HAP-1 (cell line): ENCODE measurements at regions of chr12 and their contacts with region 1.

Region 1: DNA sequence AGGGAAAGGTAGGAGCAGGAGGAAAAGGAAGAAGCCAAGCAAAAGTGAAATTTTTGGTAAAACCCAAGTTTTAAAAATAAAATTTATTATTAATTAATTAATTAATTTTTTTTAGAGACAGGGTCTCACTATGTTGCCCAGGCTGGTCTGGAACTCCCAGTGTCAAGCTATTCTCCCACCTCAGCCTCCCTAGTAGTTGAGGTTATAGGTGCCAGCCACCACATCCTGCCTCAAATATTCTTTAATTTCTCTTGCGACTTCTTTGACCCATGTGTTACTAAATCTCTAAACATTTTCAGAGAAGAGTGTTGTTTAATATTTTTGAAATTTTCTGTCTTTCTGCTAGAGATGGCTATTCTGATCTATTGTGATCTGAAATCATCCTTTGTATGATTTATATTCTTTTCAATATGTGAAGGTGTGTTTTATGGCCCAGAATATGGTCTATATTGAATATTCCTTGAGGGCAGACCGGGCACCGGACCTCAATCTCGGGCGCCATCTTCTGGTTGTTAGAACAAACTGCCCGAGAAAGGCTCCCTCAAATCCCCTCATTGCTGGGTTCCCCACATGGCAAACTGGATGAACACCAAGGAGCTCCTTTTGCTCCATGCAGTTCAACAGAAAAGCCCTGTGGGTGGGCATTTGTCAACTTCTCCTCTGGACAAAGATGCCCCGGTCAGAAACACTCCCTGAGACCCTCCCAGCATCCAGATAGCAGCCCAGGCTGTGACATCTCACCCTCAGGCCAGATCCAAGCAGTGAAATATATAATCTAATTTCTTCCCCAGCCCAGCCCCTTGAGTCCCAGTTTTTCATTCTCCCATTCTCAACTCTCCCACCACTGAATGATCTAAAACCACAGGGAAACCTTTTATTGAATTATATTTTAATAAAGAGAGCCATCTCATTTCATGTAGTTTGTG is 110.5 kb downstream of the ASCL4 start:
- DNase-seq: peak; percentile 42 to 68
- H3K4me3 ChIP-seq: no peak overlapping the region
- H3K4me1 ChIP-seq: no peaks in the 10 kb centered on the region
- H3K27me3 ChIP-seq: peaks cover 14% of the 10 kb centered on the region; the same call in 1 of the 2 replicates

Region 2: GRCh38 chr12:107679336-107679735 is 205.7 kb before region 1 on chr12:
- in situ Hi-C with region 1: loop called (anchors 5 kb)
- DNase-seq: no peak
- H3K4me3 ChIP-seq: no peak overlapping the region
- H3K4me1 ChIP-seq: peaks cover under 1% of the 10 kb centered on the region
- H3K27me3 ChIP-seq: peaks cover 48% of the 10 kb centered on the region